ENCODE measurements at regions of chr14 and their contacts with region 1.

Region 1: DNA sequence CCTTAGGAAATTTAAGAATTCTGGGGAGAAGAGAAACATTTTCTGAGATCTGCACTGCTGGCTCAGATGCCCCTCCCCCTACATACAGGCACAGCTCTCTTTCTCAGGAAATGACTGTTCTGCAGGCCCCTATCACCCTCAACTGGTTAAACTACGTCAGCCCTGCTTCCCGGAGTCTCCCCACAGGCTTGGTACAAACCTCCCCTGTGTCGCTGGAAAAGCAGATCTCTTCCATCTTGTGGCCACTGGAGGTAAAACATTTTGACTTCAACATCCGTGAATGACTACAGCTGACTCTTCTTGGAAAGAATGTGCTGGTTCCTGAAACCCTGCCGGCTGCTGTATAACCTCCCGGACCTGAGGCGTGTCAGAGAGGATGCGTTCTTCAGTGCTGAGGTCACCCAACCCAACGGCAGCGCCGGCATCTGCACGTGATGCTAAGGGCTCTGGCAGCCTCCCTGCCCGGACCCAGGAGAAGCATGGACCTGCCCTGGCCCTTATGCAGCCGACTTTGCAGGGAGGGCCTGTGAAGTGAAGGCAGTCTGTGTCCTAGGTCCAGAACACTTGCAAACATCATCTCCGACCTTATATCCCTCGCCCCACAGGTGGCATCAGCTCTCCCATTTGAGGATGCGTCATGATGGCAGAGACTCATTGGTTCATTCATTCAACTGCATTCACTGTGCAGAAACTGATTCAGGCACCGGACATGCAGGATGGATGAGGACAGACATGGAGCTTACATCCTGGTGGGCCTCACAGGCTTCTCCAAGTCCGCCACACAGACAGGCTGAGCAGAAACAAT is 129.3 kb downstream of the GCH1 start:
- DNase-seq: peak; percentile 92
- ATAC-seq: peak; percentile 81
- H3K4me3 Mint-ChIP-seq: peak overlapping the region; percentile 6
- H3K27ac Mint-ChIP-seq: peak overlapping the region; percentile 83
- H3K4me1 Mint-ChIP-seq: peaks cover 54% of the 10 kb centered on the region
- H3K27me3 Mint-ChIP-seq: peaks cover 14% of the 10 kb centered on the region

Region 2: DNA sequence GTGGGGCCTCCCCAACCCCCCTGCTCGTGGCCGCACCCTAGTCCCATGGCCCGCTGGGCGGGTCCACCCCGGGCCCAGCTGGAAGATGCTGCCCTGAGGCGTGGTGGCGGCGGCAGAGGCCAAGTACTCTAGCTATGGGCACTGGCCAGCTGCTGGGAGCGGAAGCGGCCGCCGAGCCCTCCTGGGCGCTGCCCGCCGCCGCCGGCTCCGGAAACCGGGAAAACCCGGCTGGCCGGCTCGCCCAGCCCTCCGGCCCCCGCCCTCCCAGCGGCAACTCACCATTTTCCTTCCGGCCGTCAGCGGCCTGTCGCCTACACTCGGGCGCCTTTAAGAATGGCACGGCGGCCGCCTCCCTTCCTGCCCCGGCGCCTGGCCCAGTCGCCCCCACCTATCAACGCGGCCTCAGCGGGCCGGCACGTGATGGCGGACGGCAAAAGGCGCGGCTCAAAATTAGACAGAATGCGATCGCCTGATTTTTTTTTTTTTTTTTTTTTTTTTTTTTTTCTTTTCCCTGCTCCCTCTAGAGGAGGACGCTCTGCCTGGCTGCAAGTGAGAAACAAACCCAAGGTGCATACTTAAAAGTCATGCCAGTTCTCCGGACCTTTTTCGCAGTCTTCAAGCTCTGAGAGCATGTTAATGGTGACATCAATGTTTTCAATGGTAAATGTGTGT is 284.6 kb before region 1 on chr14 and contains the start of gene GMFB:
- CTCF ChIA-PET with region 1: no interaction called
- POLR2A ChIA-PET with region 1: no interaction called
- intact Hi-C with region 1: loop called in 1 of 2 experiments (anchors 1 kb)
- DNase-seq: peak; percentile 94
- ATAC-seq: peak; percentile 96
- H3K4me3 Mint-ChIP-seq: peak within 1 kb of the TSS; percentile 91
- H3K27ac Mint-ChIP-seq: peak within 1 kb of the TSS; percentile 96
- H3K4me1 Mint-ChIP-seq: peaks cover 56% of the 10 kb centered on the region
- H3K27me3 Mint-ChIP-seq: no peaks in the 10 kb centered on the region
- total RNA-seq, gene GMFB: 28.9 to 37.3 TPM

Region 3: GRCh38 chr14:54622192-54622958 is 151.0 kb before region 1 on chr14:
- CTCF ChIA-PET with region 1: interaction called, 17 read pairs
- POLR2A ChIA-PET with region 1: no interaction called
- intact Hi-C with region 1: loop called (anchors 1 to 2 kb)
- DNase-seq: peak; percentile 87
- ATAC-seq: peak; percentile 96
- H3K4me3 Mint-ChIP-seq: no peak overlapping the region
- H3K27ac Mint-ChIP-seq: no peak overlapping the region
- H3K4me1 Mint-ChIP-seq: peaks cover 30% of the 10 kb centered on the region
- H3K27me3 Mint-ChIP-seq: no peaks in the 10 kb centered on the region

Region 4: GRCh38 chr14:54691525-54692283 is 81.7 kb before region 1 on chr14:
- CTCF ChIA-PET with region 1: interaction called, 23 read pairs
- POLR2A ChIA-PET with region 1: no interaction called
- intact Hi-C with region 1: loop called (anchors 5 kb)
- DNase-seq: peak; percentile 76
- ATAC-seq: peak; percentile 78
- H3K4me3 Mint-ChIP-seq: no peak overlapping the region
- H3K27ac Mint-ChIP-seq: no peak overlapping the region
- H3K4me1 Mint-ChIP-seq: peaks cover 12% of the 10 kb centered on the region
- H3K27me3 Mint-ChIP-seq: peaks cover 26% of the 10 kb centered on the region

Region 5: DNA sequence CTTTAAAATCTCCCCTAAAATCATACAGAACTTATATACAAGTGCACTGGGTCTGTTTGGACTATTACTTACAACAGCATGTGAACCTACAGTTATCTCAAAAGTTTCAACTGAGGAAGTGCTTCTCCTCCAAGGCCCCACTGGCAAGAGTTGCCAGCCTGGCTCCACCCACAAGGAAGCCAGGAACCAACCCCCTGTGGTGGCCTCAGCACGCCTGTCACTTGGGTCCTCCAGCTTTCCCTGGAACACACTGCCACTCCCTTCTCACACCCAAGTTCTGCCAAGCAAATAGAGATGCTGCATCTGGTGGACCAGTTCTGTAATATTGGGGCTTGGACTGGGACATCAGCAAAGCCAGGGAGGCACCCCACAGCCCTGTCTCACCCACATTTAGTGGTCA is 13.9 kb after region 1 on chr14:
- CTCF ChIA-PET with region 1: interaction called, 11 read pairs
- POLR2A ChIA-PET with region 1: no interaction called
- intact Hi-C with region 1: no loop called
- DNase-seq: no peak
- ATAC-seq: no peak
- H3K4me3 Mint-ChIP-seq: no peak overlapping the region
- H3K27ac Mint-ChIP-seq: no peak overlapping the region
- H3K4me1 Mint-ChIP-seq: peaks cover 8% of the 10 kb centered on the region
- H3K27me3 Mint-ChIP-seq: peaks cover 2% of the 10 kb centered on the region

Measured in activated CD4-positive, alpha-beta T cell treated with anti-CD3 and anti-CD28 coated beads for 36 hours (primary cell).